ENCODE measurements at regions of chr11 and their contacts with region 1.

Region 1: DNA sequence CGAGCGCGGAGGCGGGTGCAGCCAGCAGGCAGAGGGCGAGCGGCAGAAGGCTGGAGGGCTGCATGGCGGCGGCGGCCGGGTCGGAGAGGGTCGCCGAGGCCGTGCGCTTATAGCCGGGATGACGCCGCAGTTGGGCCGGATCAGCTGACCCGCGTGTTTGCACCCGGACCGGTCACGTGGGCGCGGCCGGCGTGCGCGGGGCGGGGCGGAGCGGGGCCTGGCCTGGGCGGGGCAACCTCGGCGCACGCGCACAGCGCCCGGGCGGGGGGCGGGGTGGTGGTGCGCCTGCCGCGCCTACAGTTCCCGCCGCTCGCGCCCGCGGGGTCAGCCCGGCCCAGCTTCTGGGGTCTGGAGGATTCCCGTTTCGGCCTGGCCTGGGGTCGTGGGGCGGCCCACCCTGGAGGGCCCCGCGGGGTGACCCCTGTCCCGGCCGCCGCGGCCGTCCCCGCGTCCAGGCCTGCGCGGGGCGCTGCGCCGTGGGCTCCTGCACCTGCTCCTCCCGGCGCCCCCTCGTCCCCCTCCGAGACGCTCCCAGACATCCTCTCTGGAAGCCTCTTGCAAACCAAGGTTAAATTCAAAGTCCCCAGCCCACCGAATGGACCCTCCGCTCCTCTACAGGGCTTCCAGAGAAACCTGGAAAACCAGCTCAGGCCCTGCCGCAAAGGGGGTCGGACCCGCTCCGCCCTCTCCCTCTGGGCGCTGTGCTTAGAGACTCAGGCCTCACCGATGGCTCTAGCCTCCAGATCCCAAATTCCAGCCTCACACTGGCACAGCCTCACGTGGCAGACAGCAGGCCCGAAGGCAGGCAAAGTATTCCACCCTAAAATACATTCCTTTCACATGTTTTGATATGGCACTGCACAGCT is at the start of gene CTSD:
- DNase-seq: peak; percentile 87
- ATAC-seq: peak; percentile 73
- H3K4me3 Mint-ChIP-seq: peak within 1 kb of the TSS; percentile 93
- H3K27ac Mint-ChIP-seq: peak within 1 kb of the TSS; percentile 91
- H3K4me1 Mint-ChIP-seq: 0 out of 2 replicates have a peak, but pooled peaks cover 3% of the 10 kb centered on the region
- H3K27me3 Mint-ChIP-seq: 0 out of 2 replicates have a peak, but pooled peaks cover 3% of the 10 kb centered on the region
- CTCF ChIP-seq: no peak
- total RNA-seq, gene CTSD: 194 to 199 TPM (median 198 TPM) in 3 replicates

Region 2: DNA sequence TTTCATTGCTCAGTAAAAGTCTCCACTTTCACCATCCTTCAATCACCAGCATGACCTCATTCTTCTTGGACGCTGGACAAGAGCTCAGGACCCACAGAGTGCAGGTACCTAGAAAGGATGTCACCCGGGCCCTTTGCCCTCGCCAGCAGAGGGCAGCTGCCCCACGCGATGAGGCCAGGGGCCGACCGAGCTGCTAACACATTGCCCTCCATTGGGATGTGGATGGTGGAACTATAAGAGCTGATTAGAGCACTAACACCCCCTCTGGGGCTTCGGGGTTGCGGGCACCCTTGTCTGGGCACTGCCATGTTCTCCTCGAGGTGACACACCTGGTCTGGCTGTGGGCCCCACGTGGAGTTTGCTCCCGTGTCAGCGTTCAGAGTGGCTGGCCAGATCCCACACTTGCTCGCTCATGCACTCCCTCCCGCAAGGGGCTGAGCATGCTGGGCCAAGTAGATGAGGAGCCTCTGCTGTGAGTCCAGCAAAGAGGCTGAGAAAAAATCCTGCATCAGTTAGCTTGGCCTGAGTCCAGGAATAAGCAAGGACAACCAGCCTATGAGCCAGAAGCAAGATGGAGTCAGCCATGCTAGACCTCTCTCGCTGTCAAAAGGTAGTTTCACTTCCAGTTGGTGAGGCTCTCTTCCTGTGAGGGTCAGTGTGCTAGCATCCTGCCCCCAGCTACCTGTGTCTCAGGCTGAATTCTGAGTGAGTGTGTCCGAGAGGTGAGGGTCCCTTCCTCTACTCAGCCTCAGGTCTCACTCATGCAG is 57.2 kb before region 1 on chr11:
- CTCF ChIA-PET with region 1: interaction called, 14 read pairs
- POLR2A ChIA-PET with region 1: interaction called, 4 read pairs
- DNase-seq: peak; percentile 36
- ATAC-seq: no peak; the same call in 1 of the 2 replicates
- H3K4me3 Mint-ChIP-seq: no peak overlapping the region
- H3K27ac Mint-ChIP-seq: no peak overlapping the region
- H3K4me1 Mint-ChIP-seq: no peaks in the 10 kb centered on the region
- H3K27me3 Mint-ChIP-seq: peaks cover 58% of the 10 kb centered on the region
- CTCF ChIP-seq: no peak

Region 3: DNA sequence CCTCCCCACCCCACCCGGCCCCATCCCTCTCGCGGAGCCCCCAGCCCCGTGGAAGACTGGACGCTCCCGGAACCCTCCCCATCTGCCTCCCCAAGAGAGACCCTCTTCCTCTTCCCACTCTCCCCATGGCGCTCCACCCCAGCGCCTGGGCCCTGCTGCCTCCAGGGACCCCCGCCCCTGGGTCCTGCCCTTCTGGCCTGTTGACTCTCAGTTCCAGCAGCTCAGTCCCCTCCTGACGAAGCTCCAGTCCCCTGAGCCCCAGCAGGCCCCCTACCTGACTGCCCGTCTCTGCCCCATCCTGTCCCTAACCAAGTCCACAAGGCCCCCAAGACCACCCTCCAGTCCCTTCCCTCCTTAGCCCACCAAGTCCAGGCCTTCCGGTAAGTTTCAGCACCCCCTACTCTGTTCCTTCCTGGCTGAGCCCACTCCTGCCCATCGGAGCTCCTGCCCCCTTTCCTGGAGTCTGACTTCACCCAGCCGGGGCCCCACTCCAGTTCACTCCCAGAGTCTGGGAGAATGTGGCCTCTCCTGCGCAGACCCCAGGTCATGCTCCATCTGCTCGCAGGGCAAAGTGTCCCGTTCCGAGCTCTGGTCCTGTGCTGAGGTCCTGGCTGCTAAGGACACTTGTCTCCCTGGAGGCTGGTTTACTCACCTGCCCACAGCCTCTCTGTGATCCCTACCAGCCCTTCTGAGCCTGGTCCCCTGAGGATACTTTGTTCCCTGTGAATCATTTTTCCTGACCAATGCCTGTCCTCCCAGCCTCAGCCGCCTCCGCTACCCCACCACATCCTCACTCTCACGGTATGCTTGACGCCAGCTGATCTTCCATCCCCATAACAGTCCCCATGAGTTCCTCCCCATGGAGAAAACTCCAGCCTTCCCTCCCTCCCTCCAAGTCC is 14.4 kb before region 1 on chr11:
- CTCF ChIA-PET with region 1: interaction called, 12 read pairs
- POLR2A ChIA-PET with region 1: no interaction called
- DNase-seq: no peak
- ATAC-seq: peak; percentile 6
- H3K4me3 Mint-ChIP-seq: peak overlapping the region; percentile 57
- H3K27ac Mint-ChIP-seq: no peak overlapping the region
- H3K4me1 Mint-ChIP-seq: peaks cover 12% of the 10 kb centered on the region
- H3K27me3 Mint-ChIP-seq: peaks cover 51% of the 10 kb centered on the region
- CTCF ChIP-seq: no peak

Region 4: GRCh38 chr11:1785749-1786413 is 21.9 kb after region 1 on chr11:
- CTCF ChIA-PET with region 1: interaction called, 11 read pairs
- POLR2A ChIA-PET with region 1: no interaction called
- DNase-seq: no peak
- ATAC-seq: peak; percentile 84
- H3K4me3 Mint-ChIP-seq: no peak overlapping the region
- H3K27ac Mint-ChIP-seq: no peak overlapping the region
- H3K4me1 Mint-ChIP-seq: no peaks in the 10 kb centered on the region
- H3K27me3 Mint-ChIP-seq: peaks cover 21% of the 10 kb centered on the region
- CTCF ChIP-seq: no peak